Mammary epithelial cell (primary cell): ENCODE measurements at regions of chr17 and their contacts with region 1.

Region 1: DNA sequence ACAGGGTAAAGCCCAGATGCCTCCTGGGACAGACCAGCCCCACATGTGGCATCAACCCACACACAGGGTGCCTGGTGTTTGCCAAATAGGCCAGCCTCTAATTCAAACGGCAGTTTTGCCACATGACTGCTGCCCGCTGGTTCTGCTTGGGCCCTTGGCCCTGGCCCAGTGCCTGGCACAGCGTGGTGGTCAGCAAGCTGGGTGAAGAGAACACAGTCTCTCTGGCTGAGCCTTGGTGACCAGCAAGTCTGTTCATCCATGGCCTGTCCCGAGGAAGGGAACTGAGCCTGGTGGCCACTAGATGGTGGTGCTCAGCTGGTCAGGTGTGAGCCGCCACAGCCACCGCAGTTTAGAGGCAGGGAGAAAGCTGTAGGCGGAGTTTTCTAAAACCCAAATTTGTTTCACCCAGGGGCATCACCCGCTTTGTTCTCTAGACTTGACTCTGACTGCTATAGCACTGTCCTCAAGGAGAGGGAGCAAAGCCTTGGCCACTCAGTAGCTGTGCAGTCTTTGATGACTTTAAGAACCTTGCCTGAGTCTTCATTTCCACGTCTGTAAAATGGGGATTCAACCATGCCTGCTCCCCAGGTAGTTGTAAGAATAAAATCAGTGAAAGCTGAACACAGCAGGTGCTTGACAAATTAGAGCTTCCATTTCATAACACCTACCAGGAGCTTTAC is 4.7 kb upstream of the GFAP start:
- DNase-seq: peak; percentile 66
- H3K4me3 ChIP-seq: no peak overlapping the region
- H3K27ac ChIP-seq: no peak overlapping the region
- H3K4me1 ChIP-seq: peaks cover 30% of the 10 kb centered on the region
- H3K27me3 ChIP-seq: no peaks in the 10 kb centered on the region
- CTCF ChIP-seq: peak; percentile 82 to 90

Region 2: DNA sequence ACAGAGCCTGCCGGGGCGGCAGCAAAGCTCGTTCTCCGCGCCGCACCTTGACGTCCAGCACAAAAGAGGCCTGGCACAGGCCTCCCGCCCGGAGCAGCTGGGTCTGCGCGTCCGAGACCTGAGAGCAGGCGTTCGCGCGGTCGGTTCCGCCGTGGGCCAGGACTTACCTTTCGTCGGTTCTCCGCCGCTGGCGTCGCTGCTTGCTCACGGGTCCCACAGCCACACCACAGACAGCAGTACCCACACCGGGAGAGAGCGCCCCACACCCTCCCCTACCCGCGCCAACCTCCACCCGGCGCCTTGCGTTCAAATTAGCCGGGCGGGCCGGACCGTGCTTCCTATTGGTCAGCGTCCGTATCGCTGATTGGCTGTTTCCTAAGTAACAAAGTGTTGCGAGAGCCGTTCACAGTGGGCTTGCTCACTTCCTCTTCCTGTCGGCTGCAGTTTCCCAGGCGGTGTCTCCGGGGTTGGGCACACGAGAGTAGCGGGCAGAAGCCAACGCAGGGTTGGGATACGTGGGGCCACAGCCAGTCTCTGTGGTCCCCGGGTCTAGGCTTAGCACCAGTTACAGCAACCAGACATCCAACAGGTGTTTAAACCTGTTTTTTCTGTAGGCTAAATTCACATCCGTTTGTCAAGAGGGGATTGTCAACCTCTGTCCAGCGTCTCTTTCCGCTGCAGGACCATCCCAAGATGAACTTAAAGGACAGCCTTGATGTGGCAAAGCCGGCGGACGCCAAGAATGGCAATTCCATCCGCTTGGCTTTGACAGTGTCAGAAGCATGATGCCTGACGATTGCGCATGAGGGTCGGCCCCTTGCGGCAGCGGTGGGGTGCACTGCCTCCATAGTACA is 27.7 kb after region 1 on chr17 and contains the start of gene KIF18B:
- CTCF ChIA-PET with region 1: no interaction called
- dilution Hi-C with region 1: no loop called
- in situ Hi-C with region 1: no loop called
- intact Hi-C with region 1: loop called (anchors 2 kb)
- DNase-seq: peak; percentile 93
- H3K4me3 ChIP-seq: peak within 1 kb of the TSS; percentile 90 to 98 (median 92)
- H3K27ac ChIP-seq: peak within 1 kb of the TSS; percentile 72
- H3K4me1 ChIP-seq: peaks cover 14% of the 10 kb centered on the region
- H3K27me3 ChIP-seq: no peaks in the 10 kb centered on the region
- CTCF ChIP-seq: no peak
- total RNA-seq, gene KIF18B: under 0.01 to 25.2 TPM

Region 3: GRCh38 chr17:45006927-45007461 is 87.0 kb after region 1 on chr17:
- CTCF ChIA-PET with region 1: interaction called, 4 read pairs
- dilution Hi-C with region 1: loop called (anchors 5 kb)
- in situ Hi-C with region 1: loop called (anchors 10 kb)
- intact Hi-C with region 1: loop called (anchors 2 kb)
- DNase-seq: no peak
- H3K4me3 ChIP-seq: no peak overlapping the region
- H3K27ac ChIP-seq: no peak overlapping the region
- H3K4me1 ChIP-seq: no peaks in the 10 kb centered on the region
- H3K27me3 ChIP-seq: no peaks in the 10 kb centered on the region
- CTCF ChIP-seq: peak in 1 of 2 donors; percentile 28

Region 4: DNA sequence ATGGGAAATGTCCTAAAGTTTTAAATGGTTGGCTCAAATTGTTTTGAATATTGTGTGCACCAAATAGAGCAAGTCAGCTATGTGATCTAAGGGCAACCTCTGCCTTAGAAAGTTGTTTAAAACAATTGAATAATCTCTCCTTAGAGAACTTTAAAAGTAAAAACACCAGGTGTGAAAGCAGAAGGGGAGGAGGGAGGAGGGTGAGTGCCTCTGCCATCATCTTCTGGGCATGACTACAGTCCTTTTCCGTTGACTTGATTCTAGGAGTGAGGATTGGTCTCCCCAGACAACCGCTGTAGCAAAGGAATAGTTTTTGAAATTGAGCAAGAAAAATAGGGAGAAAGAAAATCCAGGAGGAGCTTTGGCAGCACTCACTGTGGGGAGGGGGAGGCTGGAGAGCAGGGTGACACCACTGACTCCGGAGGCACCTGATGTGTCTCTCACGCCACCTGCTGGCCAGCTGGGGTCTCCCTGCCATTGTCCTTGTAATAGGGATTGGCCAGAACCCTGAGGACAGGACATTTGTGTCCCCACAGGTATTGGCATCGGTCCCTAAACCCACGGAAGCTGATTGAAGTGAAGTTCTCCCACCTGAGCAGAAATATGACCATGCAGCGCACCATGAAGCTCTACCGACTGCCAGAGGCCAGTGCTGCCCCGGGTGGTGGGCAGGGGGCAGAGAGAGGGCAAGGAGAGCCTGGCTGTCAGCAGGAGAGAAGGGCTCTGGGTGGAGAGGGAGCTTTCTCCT is 179.0 kb after region 1 on chr17:
- CTCF ChIA-PET with region 1: interaction called, 5 read pairs
- dilution Hi-C with region 1: no loop called
- in situ Hi-C with region 1: loop called in 1 of 2 experiments (anchors 10 kb)
- intact Hi-C with region 1: loop called (anchors 1 kb)
- DNase-seq: peak; percentile 55
- H3K4me3 ChIP-seq: no peak overlapping the region
- H3K27ac ChIP-seq: peak overlapping the region; percentile 25
- H3K4me1 ChIP-seq: peaks cover 48% of the 10 kb centered on the region
- H3K27me3 ChIP-seq: no peaks in the 10 kb centered on the region
- CTCF ChIP-seq: peak; percentile 91 to 95

Region 5: GRCh38 chr17:45148183-45149036 is 228.4 kb after region 1 on chr17 and contains the start of gene HEXIM1:
- CTCF ChIA-PET with region 1: interaction called, 16 read pairs
- dilution Hi-C with region 1: no loop called
- in situ Hi-C with region 1: no loop called
- intact Hi-C with region 1: no loop called
- DNase-seq: peak; percentile 100
- H3K4me3 ChIP-seq: peak within 1 kb of the TSS; percentile 72 to 98 (median 98)
- H3K27ac ChIP-seq: peak within 1 kb of the TSS; percentile 99
- H3K4me1 ChIP-seq: peaks cover 34% of the 10 kb centered on the region
- H3K27me3 ChIP-seq: no peaks in the 10 kb centered on the region
- CTCF ChIP-seq: no peak
- total RNA-seq, gene HEXIM1: 20.5 to 35.2 TPM